PC-3 (cell line): ENCODE measurements at regions of chr10 and their contacts with region 1.

Region 1: DNA sequence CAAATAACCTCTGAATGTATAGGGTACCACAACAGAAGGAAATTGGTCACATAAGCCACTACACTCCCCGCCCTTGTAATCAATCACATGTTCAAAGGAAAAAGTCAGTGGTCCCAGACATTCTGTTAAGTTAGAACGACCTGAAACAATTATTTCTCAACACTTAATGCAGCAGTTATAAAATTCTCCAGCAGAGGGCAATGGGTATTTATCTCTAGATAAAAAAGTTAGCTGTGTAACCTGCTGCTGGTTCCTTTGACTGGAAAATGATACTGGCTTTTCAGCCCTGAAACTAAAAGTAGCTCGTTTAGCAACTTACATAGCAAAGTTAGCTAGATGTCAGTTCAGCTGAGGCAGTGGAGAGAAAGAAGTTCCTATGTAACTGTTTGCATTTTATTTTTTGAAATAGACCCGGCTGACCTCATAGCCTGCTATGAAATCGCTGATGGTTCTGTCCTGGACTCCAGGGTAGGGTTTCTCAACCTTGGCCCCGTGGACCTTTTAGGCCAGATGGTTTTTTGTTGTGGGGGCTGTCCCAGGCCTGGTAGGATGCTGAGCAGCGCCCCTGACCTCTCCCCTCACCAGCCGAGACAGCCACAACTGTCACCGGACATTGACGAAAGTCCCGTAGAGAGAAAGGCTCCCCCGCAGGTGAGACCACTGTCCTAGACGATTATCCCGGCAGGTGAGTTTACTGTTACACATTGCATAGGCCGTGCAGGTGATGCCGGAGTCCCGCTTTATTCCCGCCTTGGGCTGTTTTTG is 40.2 kb upstream of the PROSER2 start:
- DNase-seq: peak; percentile 82
- ATAC-seq: peak; percentile 67
- H3K4me3 ChIP-seq: no peak overlapping the region
- H3K27ac ChIP-seq: no peak overlapping the region
- H3K4me1 ChIP-seq: no peaks in the 10 kb centered on the region
- H3K27me3 ChIP-seq: no peaks in the 10 kb centered on the region
- CTCF ChIP-seq: peak; percentile 64

Region 2: DNA sequence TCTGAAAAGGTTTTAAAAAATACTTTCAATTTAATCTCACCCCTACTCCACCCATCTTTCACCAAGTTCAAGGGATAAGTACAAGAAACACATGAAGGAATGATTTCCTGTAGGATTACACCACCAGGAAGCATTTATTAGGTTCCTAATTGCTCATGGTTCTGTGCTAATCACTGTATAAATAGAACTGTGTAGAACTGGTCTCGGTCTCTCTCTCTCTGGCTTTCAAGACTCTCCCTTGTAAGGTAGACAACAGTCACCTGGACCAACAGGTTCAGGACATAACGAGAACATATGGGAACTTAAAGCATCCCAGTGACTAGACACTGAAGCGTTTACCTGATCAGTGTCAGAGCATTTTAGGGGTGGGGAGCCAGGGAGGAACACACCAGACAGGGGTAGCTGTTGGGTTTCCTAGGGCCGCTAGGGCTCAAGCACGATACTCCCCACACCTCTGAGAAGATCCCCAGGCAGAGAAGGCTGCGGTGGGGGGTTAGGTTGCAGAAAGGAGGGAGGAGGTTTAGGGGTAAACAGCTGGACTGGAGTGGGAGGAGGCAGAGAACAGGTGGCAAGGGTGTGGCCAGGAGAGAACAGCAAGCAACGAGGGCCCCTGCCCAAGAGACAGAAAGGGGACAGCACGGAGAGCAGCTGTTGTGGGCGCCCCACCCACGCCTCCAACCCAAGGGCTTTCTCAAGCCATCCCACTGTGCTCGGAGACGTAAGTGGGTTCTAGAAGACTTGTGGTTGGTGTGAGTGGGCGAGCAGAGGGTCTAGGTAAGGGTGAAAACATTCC is 119.0 kb before region 1 on chr10:
- CTCF ChIA-PET with region 1: no interaction called
- POLR2A ChIA-PET with region 1: no interaction called
- intact Hi-C with region 1: no loop called
- DNase-seq: no peak
- ATAC-seq: no peak
- H3K4me3 ChIP-seq: no peak overlapping the region
- H3K27ac ChIP-seq: no peak overlapping the region
- H3K4me1 ChIP-seq: no peaks in the 10 kb centered on the region
- H3K27me3 ChIP-seq: no peaks in the 10 kb centered on the region
- CTCF ChIP-seq: no peak

Region 3: GRCh38 chr10:11713186-11713743 is 69.7 kb before region 1 on chr10:
- CTCF ChIA-PET with region 1: no interaction called
- POLR2A ChIA-PET with region 1: no interaction called
- intact Hi-C with region 1: no loop called
- DNase-seq: no peak
- ATAC-seq: no peak
- H3K4me3 ChIP-seq: no peak overlapping the region
- H3K27ac ChIP-seq: no peak overlapping the region
- H3K4me1 ChIP-seq: peaks cover 18% of the 10 kb centered on the region
- H3K27me3 ChIP-seq: no peaks in the 10 kb centered on the region
- CTCF ChIP-seq: no peak

Region 4: GRCh38 chr10:11799736-11800080 is 16.7 kb after region 1 on chr10:
- CTCF ChIA-PET with region 1: no interaction called
- POLR2A ChIA-PET with region 1: no interaction called
- intact Hi-C with region 1: no loop called
- DNase-seq: no peak
- ATAC-seq: no peak
- H3K4me3 ChIP-seq: no peak overlapping the region
- H3K27ac ChIP-seq: no peak overlapping the region
- H3K4me1 ChIP-seq: peaks cover 2% of the 10 kb centered on the region
- H3K27me3 ChIP-seq: no peaks in the 10 kb centered on the region
- CTCF ChIP-seq: no peak

Region 5: GRCh38 chr10:11819030-11819429 is 36.1 kb after region 1 on chr10:
- CTCF ChIA-PET with region 1: interaction called, 4 read pairs
- POLR2A ChIA-PET with region 1: no interaction called
- intact Hi-C with region 1: loop called (anchors 5 kb)
- DNase-seq: no peak
- ATAC-seq: no peak
- H3K4me3 ChIP-seq: no peak overlapping the region
- H3K27ac ChIP-seq: no peak overlapping the region
- H3K4me1 ChIP-seq: peaks cover 11% of the 10 kb centered on the region
- H3K27me3 ChIP-seq: no peaks in the 10 kb centered on the region
- CTCF ChIP-seq: no peak

Region 6: DNA sequence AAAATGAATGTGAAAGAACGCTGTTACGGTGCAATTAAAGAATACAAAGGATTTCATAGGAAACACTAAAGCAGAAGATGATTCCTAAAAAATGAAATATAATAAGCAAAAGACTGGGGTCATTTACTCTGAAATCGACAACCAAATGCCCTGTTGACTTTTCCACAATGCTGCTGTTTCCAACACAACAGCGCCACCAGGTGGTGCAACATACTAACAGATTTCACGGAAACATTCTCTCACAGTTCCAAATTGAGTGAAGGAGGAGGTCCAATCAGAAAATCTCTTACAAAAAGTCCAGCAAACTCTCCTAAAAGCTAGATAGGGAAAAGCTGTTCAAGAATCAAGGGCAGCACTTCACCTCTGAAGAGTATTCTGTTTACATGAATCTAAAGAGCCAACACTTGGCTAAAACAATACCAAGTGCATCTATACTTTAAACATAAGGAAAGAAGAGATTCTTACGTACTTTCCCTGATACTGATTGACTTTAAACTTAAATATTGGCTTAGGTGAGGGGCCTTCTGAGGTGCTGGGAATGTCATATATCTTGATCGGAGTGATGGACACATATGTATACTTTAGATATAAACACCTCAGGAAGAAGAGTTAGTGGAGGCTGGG is 203.7 kb after region 1 on chr10:
- CTCF ChIA-PET with region 1: interaction called, 10 read pairs
- POLR2A ChIA-PET with region 1: no interaction called
- intact Hi-C with region 1: loop called (anchors 1 kb)
- DNase-seq: peak; percentile 76
- ATAC-seq: peak; percentile 62
- H3K4me3 ChIP-seq: no peak overlapping the region
- H3K27ac ChIP-seq: peak overlapping the region; percentile 58
- H3K4me1 ChIP-seq: peaks cover 5% of the 10 kb centered on the region; the same call in 1 of the 2 replicates
- H3K27me3 ChIP-seq: no peaks in the 10 kb centered on the region
- CTCF ChIP-seq: peak; percentile 82